Left lung (tissue), 14 donors: ENCODE measurements at regions of chr4 and their contacts with region 1.

Region 1: GRCh38 chr4:139642364-139642763 is 23.3 kb upstream of the MGST2 start:
- DNase-seq: no peak
- ATAC-seq: peak; percentile 50
- H3K4me3 ChIP-seq: no peak overlapping the region
- H3K27ac ChIP-seq: no peak overlapping the region
- H3K4me1 ChIP-seq: no peaks in the 10 kb centered on the region
- H3K27me3 ChIP-seq: no peaks in the 10 kb centered on the region
- CTCF ChIP-seq: no peak

Region 2: GRCh38 chr4:139361301-139361700 is 281.1 kb before region 1 on chr4:
- intact Hi-C with region 1: no loop called
- DNase-seq: no peak
- ATAC-seq: no peak
- H3K4me3 ChIP-seq: no peak overlapping the region
- H3K27ac ChIP-seq: no peak overlapping the region
- H3K4me1 ChIP-seq: no peaks in the 10 kb centered on the region
- H3K27me3 ChIP-seq: no peaks in the 10 kb centered on the region
- CTCF ChIP-seq: no peak

Region 3: GRCh38 chr4:139416073-139416673 is 226.2 kb before region 1 on chr4:
- intact Hi-C with region 1: loop called in 1 of 2 experiments (anchors 10 kb)
- DNase-seq: peak in 2 of 4 donors; percentile 5 to 46
- ATAC-seq: peak; percentile 74
- H3K4me3 ChIP-seq: no peak overlapping the region
- H3K27ac ChIP-seq: peak overlapping the region in 1 of 2 donors; percentile 18
- H3K4me1 ChIP-seq: peaks cover 0 to 43% of the 10 kb centered on the region in 2 donors
- H3K27me3 ChIP-seq: no peaks in the 10 kb centered on the region
- CTCF ChIP-seq: peak; percentile 68 to 78

Region 4: GRCh38 chr4:139501927-139502899 is 140.2 kb before region 1 on chr4:
- intact Hi-C with region 1: loop called in 1 of 2 experiments (anchors 5 kb)
- DNase-seq: peak in 1 of 4 donors; percentile 35
- ATAC-seq: peak; percentile 80
- H3K4me3 ChIP-seq: no peak overlapping the region
- H3K27ac ChIP-seq: no peak overlapping the region
- H3K4me1 ChIP-seq: no peaks in the 10 kb centered on the region
- H3K27me3 ChIP-seq: no peaks in the 10 kb centered on the region
- CTCF ChIP-seq: no peak

Region 5: GRCh38 chr4:139783741-139784484 is 141.5 kb after region 1 on chr4:
- intact Hi-C with region 1: no loop called
- DNase-seq: no peak
- ATAC-seq: no peak
- H3K4me3 ChIP-seq: no peak overlapping the region
- H3K27ac ChIP-seq: no peak overlapping the region
- H3K4me1 ChIP-seq: peaks cover 0 to 9% of the 10 kb centered on the region in 2 donors
- H3K27me3 ChIP-seq: no peaks in the 10 kb centered on the region
- CTCF ChIP-seq: no peak